ENCODE measurements at regions of chr2 and their contacts with region 1.

Region 1: DNA sequence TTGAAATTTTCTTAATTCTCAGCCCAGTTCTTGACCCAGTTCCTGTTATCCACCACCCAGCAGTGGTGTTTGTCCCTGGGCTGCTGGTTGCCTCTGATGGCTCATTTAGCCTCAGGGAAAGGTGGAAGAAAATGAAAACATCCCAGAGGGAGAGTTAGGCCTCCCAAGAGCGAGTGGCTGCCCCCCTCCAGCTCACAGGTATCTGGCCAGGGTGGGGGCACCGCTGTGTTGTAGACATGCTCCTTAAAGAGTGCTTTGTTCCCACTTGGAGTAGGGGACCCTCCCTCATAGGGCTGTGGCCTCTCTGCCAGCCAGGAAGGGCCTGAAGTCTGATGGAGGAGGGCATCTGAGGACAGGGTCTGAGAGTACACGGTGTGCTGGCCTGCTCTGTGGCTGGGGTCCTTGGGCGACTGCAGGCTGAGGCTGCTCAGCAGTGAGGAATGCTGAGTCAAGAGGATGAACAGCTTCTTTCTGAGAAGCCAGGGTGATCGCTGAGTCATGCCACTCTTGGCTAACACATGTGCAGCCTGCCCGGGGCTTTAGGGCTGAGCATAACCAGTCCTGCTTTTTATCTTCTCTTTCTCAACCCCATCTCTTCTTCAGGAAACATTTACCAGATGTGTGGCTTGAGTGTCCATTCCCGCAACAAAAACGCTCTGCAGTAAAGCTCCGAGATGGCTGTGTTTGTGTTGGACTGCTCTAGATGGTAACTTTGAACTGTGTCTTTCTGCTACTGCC is 72.3 kb downstream of the IL1R2 start:
- DNase-seq: no peak
- ATAC-seq: peak; percentile 69
- H3K4me3 ChIP-seq: no peak overlapping the region
- H3K27ac ChIP-seq: no peak overlapping the region
- H3K4me1 ChIP-seq: no peaks in the 10 kb centered on the region; the same call in 1 of the 2 replicates
- H3K27me3 ChIP-seq: no peaks in the 10 kb centered on the region; a peak in 1 of 4 replicates
- CTCF ChIP-seq: no peak
- EP300 ChIP-seq: no peak
- POLR2A ChIP-seq: no peak
- RAD21 ChIP-seq: no peak

Region 2: DNA sequence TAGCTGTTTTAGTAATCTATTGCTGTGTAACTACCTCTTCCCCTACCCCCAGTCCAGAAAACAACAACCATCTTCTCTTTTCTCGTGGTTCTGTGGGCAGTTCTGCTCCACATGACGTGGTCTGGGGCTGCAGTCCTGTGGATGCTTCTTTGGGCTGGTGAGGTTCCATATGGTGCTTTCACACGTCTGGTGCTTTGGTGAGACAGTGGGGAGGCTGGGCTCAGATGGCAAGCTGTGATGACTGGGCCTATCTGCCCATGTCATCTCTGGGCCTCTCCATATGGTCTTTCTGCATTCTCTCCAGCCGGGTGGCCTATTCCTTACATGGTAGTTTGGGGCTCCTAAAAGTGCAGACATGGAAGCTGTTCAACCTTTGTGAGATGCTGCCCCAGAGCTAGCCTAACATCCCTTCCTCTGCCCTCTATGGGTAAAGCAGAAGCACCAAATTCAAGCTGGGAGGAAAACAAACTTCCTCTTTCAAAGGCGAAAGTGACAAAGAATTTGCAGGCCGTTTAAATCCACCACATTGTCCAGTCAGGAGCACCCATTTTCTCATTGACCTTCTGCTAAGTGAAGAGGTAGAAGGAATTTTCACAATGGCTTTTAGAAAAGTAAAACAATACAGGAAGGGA is 10.2 kb after region 1 on chr2:
- CTCF ChIA-PET with region 1: interaction called, 4 read pairs
- POLR2A ChIA-PET with region 1: interaction called, 4 read pairs
- RAD21 ChIA-PET with region 1: interaction called, 6 read pairs
- SMC1A ChIA-PET with region 1: interaction called, 33 read pairs
- in situ Hi-C with region 1: no loop called
- intact Hi-C with region 1: no loop called
- DNase-seq: no peak
- ATAC-seq: peak; percentile 74
- H3K4me3 ChIP-seq: no peak overlapping the region
- H3K27ac ChIP-seq: no peak overlapping the region
- H3K4me1 ChIP-seq: 0 out of 2 replicates have a peak, but pooled peaks cover 4% of the 10 kb centered on the region
- H3K27me3 ChIP-seq: no peaks in the 10 kb centered on the region
- CTCF ChIP-seq: 0 out of 6 replicates have a peak, but pooled peaks of 2 of the 3 experiments have one; percentile 8
- EP300 ChIP-seq: no peak
- POLR2A ChIP-seq: no peak
- RAD21 ChIP-seq: no peak

Measured in GM12878 (cell line).